Heart left ventricle (tissue), 16 donors: ENCODE measurements at regions of chr5 and their contacts with region 1.

Region 1: DNA sequence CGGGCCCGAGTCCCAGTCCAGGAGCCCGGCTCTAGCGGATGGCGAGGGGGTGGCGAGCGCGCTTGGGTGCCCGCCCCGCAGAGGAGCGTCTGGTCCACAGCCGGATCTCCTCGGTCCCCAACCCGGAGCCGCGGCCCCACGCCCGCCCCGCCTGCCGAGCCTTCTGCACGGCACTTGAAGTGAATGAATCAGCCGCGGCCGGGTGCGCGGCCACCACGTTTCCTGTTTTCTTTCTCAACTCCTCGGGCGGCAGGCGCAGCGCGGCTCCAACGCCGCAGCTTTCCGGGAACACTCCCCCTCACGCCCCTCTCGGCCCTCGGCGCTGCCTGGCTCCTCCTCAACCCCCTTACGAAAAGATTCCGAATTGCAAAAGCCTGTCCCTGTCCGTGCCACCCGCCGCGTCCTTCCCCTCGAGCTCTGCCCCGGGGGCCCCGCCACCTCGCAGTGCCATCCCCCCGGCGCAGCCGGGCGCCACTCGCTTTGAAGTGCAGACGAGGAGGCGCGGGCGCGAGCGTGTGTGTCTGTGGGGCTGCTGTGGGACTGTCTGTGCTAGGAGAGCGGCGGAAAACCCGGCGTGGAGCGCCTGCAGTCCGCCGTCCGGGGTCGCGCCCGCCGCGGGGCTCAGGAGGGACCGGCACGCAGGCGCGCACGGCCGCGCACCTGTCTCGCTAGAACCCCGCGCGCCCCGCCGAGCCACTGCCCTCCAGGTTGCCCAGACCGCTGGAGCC is 456.6 kb downstream of the RAB3C start:
- DNase-seq: peak; percentile 60 to 93 (median 84)
- ATAC-seq: peak; percentile 29 to 79 (median 74)
- H3K4me3 ChIP-seq: peak overlapping the region; percentile 48 to 92 (median 74)
- H3K27ac ChIP-seq: peak overlapping the region; percentile 42 to 91 (median 78)
- H3K4me1 ChIP-seq: peaks cover 0 to 60% (median 29%) of the 10 kb centered on the region in 12 donors
- H3K27me3 ChIP-seq: no peaks in the 10 kb centered on the region
- CTCF ChIP-seq: no peak
- POLR2A ChIP-seq: peak in 1 of 2 donors; percentile 55

Region 2: DNA sequence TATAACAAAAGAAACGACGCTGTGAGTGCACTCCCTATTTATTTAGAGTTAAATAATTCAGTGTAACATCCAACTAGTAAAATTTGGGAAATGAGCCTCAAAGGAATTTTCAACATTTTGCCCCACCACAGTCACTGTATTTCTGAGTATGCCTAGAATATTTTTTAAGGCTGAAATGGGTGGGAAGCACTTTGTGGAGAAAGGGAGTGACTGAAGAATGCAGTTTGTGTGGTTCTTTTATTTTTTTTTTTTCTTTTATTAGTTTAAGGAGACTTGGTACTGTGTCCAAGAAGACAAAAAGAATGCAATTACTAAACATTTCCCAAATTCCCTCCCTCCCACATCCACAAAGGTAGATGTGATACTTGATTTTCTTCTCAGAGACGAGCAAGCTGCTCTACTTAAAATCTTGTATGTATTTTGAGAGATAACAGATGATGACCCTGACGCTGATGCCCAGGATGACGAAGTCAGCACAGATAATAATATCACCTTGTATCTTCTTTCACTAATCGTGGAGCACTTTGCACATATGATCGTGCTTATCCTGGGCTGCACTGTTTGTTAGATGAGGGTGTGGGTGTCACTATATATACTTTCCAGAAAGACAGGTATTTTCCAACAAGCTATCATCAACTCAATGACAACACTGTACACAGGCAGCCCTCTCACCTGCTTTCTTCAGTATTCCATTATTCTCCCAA is 129.8 kb after region 1 on chr5:
- intact Hi-C with region 1: loop called in 8 of 10 experiments (anchors 1 to 10 kb)
- DNase-seq: no peak
- ATAC-seq: peak in 2 of 4 donors; percentile 13 to 44
- H3K4me3 ChIP-seq: no peak overlapping the region
- H3K27ac ChIP-seq: no peak overlapping the region
- H3K4me1 ChIP-seq: peaks cover 0 to 8% (median 0%) of the 10 kb centered on the region in 12 donors
- H3K27me3 ChIP-seq: no peaks in the 10 kb centered on the region
- CTCF ChIP-seq: no peak
- POLR2A ChIP-seq: no peak

Region 3: DNA sequence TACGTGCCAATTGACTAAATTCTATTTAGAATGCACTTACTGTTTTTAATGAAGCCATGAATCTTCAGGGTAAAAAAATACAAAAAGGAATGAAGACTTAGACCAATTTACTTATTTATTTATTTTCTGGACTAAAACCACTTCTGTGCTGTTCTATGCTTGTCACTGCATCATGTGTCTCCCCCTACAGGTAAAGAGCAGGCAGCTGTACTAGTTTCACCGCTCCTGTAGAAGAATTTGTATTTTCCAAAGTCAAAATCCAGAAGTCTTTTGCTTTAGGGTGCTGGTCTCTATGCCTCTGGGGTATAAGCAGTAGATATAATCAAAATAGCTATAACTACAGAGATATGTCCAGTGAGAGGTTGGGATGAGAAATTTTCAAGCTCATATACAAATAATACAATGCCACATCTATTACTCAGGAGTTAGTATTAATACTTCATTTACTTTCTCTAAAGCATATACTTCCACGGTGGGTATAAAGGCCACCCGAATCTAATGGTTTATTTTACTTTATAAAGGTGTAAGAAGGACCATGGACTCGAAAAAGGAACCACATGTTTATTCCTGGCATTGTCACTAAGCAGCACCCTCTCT is 134.9 kb after region 1 on chr5:
- intact Hi-C with region 1: loop called (anchors 1 to 10 kb)
- DNase-seq: peak in 1 of 5 donors; percentile 20
- ATAC-seq: peak; percentile 71 to 86 (median 78)
- H3K4me3 ChIP-seq: no peak overlapping the region
- H3K27ac ChIP-seq: no peak overlapping the region
- H3K4me1 ChIP-seq: peaks cover 0 to 12% (median 0%) of the 10 kb centered on the region in 12 donors
- H3K27me3 ChIP-seq: no peaks in the 10 kb centered on the region
- CTCF ChIP-seq: peak; percentile 58 to 89 (median 82)
- POLR2A ChIP-seq: no peak

Region 4: GRCh38 chr5:59356813-59357380 is 317.4 kb after region 1 on chr5:
- intact Hi-C with region 1: loop called in 3 of 10 experiments (anchors 5 to 10 kb)
- DNase-seq: peak; percentile 62 to 83 (median 73)
- ATAC-seq: peak; percentile 90 to 95 (median 93)
- H3K4me3 ChIP-seq: peak overlapping the region; percentile 9 to 56 (median 45)
- H3K27ac ChIP-seq: peak overlapping the region; percentile 7 to 80 (median 76)
- H3K4me1 ChIP-seq: peaks cover 0 to 43% (median 23%) of the 10 kb centered on the region in 12 donors
- H3K27me3 ChIP-seq: no peaks in the 10 kb centered on the region
- CTCF ChIP-seq: peak in 5 of 12 donors; percentile 4 to 33 (median 16)
- POLR2A ChIP-seq: no peak